Activated T-helper 1 cell treated with anti-CD3 and anti-CD28 coated beads, Interleukin-12 subunit alpha, Interleukin-12 subunit beta, Interleukin-2, Interleukin-4 antibody, amounts not matched to agents 30 ng/mL and 10 ng/mL and 1 ng/mL, durations not matched to agents 14 hours and 24 hours and 36 hours (primary cell): ENCODE measurements at regions of chr7 and their contacts with region 1.

Region 1: DNA sequence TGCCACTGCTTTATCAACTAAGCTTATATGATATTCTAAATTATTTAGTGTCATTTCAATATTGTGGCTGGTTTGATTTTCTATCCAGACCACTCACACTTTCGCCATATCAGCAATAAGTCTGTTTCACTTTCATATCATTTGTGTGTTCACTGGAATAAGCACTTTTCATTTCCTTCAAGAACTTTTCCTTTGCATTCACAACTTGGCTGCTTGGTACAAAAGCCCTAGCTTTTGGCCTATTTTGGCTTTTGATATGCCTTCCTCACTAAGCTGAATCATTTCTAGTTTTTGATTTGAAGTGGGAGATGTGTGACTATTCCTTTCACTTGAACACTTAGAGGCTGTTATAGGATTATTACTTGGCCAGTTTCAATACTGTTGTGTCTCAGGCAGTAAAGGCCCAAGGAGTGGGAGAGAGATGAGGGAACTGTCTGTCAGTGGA is 120.9 kb upstream of the NAMPT start:
- DNase-seq: no peak
- H3K4me3 Mint-ChIP-seq: no peak overlapping the region
- H3K27ac Mint-ChIP-seq: peak overlapping the region; percentile 30
- H3K4me1 Mint-ChIP-seq: peaks cover 23% of the 10 kb centered on the region
- H3K27me3 Mint-ChIP-seq: peaks cover 23% of the 10 kb centered on the region

Region 2: GRCh38 chr7:105522062-105522936 is 883.4 kb before region 1 on chr7 and contains the start of gene PUS7:
- intact Hi-C with region 1: no loop called
- DNase-seq: peak; percentile 71
- H3K4me3 Mint-ChIP-seq: peak within 1 kb of the TSS; percentile 98
- H3K27ac Mint-ChIP-seq: peak within 1 kb of the TSS; percentile 96
- H3K4me1 Mint-ChIP-seq: peaks cover 14% of the 10 kb centered on the region
- H3K27me3 Mint-ChIP-seq: no peaks in the 10 kb centered on the region
- total RNA-seq, gene PUS7: 47.8 and 50.7 TPM in 2 replicates

Region 3: DNA sequence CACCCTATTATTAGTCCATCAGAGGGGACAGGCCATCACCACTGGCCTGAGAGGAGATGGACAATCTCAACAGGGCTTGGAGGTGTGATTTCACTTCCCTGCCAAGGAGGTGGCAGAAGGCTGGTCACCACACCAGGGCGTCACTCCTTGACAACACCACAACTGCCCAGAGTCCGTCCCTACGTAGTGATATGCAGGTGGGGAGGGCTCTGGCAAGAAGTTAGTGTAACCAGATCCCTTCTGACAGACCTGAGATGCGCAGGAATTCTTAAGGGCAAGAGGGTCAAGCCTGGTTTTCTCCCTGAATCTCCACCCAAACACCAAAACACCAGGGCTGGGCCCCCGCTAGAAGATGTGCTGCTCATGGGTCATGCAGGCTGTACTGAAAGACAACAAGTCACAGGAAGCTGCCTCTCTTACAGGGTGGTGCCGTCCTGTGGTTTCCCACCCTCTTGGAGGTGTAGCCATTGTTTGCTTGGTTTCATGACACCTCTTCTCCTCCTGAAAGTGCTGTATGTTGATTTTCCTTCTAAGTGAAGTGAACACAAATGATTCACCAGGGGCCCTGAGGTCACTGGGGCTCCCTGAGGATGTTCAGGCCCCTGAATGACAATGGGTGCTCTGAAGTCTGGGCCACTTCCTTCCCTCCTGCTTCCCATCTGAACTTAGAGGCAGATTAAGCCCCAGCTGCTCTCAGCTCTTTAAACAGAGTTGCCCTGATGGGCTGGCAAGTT is 556.4 kb before region 1 on chr7:
- intact Hi-C with region 1: loop called (anchors 1 kb)
- DNase-seq: peak; percentile 70
- H3K4me3 Mint-ChIP-seq: peak overlapping the region; percentile 60
- H3K27ac Mint-ChIP-seq: peak overlapping the region; percentile 80
- H3K4me1 Mint-ChIP-seq: peaks cover 59% of the 10 kb centered on the region
- H3K27me3 Mint-ChIP-seq: peaks cover under 1% of the 10 kb centered on the region

Region 4: DNA sequence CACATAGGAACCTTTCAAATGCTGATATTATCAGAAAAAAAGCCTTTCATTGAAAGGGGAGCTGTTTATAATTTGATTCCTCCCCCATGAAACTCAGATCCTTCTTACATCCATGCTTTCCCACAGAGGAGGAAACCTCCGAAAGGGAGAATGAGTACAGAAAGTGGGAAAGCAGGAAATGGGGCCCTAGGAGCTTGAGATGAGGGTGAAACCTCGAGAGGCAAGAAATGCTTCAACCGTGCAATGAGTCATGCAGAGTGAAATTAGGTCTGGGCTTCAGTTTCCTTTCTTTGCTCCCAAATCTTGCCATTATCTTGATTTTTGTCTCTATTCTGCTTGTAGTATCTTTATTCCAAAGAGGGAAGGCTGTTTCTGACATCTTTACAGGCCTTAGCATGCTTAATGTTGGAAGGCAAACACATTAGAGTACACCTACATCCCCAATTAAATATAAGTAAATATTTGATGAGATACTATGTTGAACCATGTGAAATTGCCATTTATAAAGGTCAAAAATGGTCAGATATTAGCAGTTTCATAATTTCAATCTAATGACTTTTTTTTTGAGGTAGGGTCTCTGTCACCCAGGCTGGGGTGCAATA is 200.0 kb before region 1 on chr7:
- intact Hi-C with region 1: no loop called
- DNase-seq: no peak
- H3K4me3 Mint-ChIP-seq: no peak overlapping the region
- H3K27ac Mint-ChIP-seq: no peak overlapping the region
- H3K4me1 Mint-ChIP-seq: peaks cover 6% of the 10 kb centered on the region
- H3K27me3 Mint-ChIP-seq: peaks cover 22% of the 10 kb centered on the region

Region 5: DNA sequence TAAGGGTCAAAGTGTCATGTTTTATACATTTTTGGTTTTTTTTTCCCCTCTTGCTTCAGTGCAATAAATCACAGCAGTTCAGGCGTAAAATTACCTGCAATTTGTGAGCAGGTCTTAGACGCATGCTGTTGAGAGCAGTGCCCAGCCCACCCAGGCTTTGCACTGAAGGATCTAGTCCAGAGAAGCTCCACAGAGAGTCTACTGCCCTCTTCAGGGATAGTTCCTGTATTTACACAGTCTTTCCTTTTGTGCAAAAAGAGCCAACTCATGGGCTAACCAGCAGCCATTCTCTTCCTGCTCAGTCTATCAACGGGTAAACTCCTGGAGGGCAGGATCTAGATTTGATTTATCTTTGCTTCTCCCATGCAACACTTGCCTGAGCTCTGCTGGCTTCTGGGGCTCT is 38.7 kb before region 1 on chr7:
- intact Hi-C with region 1: loop called (anchors 1 kb)
- DNase-seq: no peak
- H3K4me3 Mint-ChIP-seq: no peak overlapping the region
- H3K27ac Mint-ChIP-seq: peak overlapping the region; percentile 35
- H3K4me1 Mint-ChIP-seq: peaks cover 36% of the 10 kb centered on the region
- H3K27me3 Mint-ChIP-seq: no peaks in the 10 kb centered on the region

Region 6: GRCh38 chr7:106425017-106425719 is 19.4 kb after region 1 on chr7:
- intact Hi-C with region 1: loop called (anchors 1 kb)
- DNase-seq: peak; percentile 67
- H3K4me3 Mint-ChIP-seq: peak overlapping the region; percentile 67
- H3K27ac Mint-ChIP-seq: peak overlapping the region; percentile 97
- H3K4me1 Mint-ChIP-seq: peaks cover 91% of the 10 kb centered on the region
- H3K27me3 Mint-ChIP-seq: no peaks in the 10 kb centered on the region

Region 7: GRCh38 chr7:106485031-106485551 is 79.4 kb after region 1 on chr7:
- intact Hi-C with region 1: loop called (anchors 1 kb)
- DNase-seq: no peak
- H3K4me3 Mint-ChIP-seq: peak overlapping the region; percentile 19
- H3K27ac Mint-ChIP-seq: peak overlapping the region; percentile 81
- H3K4me1 Mint-ChIP-seq: peaks cover 41% of the 10 kb centered on the region
- H3K27me3 Mint-ChIP-seq: no peaks in the 10 kb centered on the region

Region 8: GRCh38 chr7:106772655-106773108 is 367.0 kb after region 1 on chr7:
- intact Hi-C with region 1: loop called (anchors 1 kb)
- DNase-seq: no peak
- H3K4me3 Mint-ChIP-seq: peak overlapping the region; percentile 47
- H3K27ac Mint-ChIP-seq: peak overlapping the region; percentile 98
- H3K4me1 Mint-ChIP-seq: peaks cover 63% of the 10 kb centered on the region
- H3K27me3 Mint-ChIP-seq: no peaks in the 10 kb centered on the region